Activated T-helper 2 cell treated with anti-CD3 and anti-CD28 coated beads, Interferon-gamma antibody, Interleukin-2, Interleukin-4, amounts not matched to agents 10 μg/mL and 5 μg/mL and 100 μg/mL, durations not matched to agents 14 hours and 24 hours and 36 hours (primary cell): ENCODE measurements at regions of chr6 and their contacts with region 1.

Region 1: GRCh38 chr6:152267967-152268845 is 369.0 kb downstream of the SYNE1 start:
- DNase-seq: no peak
- H3K4me3 Mint-ChIP-seq: no peak overlapping the region
- H3K27ac Mint-ChIP-seq: no peak overlapping the region
- H3K4me1 Mint-ChIP-seq: peaks cover 15% of the 10 kb centered on the region
- H3K27me3 Mint-ChIP-seq: no peaks in the 10 kb centered on the region

Region 2: DNA sequence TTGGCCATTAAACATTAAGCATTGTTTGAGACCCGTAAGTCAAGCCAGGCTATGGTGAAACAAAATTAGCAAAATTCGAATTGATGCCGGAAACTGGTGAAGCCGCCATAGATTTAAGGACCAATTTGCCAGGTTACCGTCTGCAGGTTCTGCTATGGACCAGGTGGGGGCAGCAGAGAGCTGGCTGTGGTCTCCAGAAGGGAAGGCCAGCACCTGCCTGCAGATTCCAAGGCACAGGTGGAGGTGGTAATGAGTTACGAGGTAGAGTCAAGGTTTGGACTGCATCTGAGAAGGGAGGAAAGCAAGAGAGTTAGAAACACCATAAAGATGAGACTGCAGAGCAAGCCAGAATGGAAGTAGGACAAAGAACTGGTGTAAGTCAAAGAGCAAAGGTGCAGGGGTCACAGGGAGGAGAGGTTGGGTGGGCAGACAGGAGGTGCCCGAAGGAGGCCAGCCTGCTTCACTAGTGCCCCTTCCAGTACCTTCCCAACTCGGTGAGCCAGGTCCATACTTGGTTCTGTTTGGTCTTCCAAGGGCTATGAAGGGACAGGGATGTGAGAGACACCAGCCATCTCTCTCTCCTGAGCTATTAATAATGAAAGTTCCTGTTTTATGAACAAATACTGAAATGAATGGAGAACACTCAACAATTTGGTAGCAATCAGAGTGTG is 592.3 kb before region 1 on chr6:
- intact Hi-C with region 1: loop called (anchors 2 kb)
- DNase-seq: peak; percentile 27
- H3K4me3 Mint-ChIP-seq: no peak overlapping the region
- H3K27ac Mint-ChIP-seq: no peak overlapping the region
- H3K4me1 Mint-ChIP-seq: peaks cover 4% of the 10 kb centered on the region
- H3K27me3 Mint-ChIP-seq: peaks cover 2% of the 10 kb centered on the region

Region 3: GRCh38 chr6:151690768-151691562 is 577.2 kb before region 1 on chr6:
- intact Hi-C with region 1: loop called (anchors 5 kb)
- DNase-seq: no peak
- H3K4me3 Mint-ChIP-seq: peak overlapping the region; percentile 51
- H3K27ac Mint-ChIP-seq: no peak overlapping the region
- H3K4me1 Mint-ChIP-seq: peaks cover 17% of the 10 kb centered on the region
- H3K27me3 Mint-ChIP-seq: peaks cover 12% of the 10 kb centered on the region

Region 4: GRCh38 chr6:151765444-151765886 is 502.7 kb before region 1 on chr6:
- intact Hi-C with region 1: loop called (anchors 1 kb)
- DNase-seq: no peak
- H3K4me3 Mint-ChIP-seq: no peak overlapping the region
- H3K27ac Mint-ChIP-seq: no peak overlapping the region
- H3K4me1 Mint-ChIP-seq: peaks cover 22% of the 10 kb centered on the region
- H3K27me3 Mint-ChIP-seq: peaks cover 13% of the 10 kb centered on the region

Region 5: DNA sequence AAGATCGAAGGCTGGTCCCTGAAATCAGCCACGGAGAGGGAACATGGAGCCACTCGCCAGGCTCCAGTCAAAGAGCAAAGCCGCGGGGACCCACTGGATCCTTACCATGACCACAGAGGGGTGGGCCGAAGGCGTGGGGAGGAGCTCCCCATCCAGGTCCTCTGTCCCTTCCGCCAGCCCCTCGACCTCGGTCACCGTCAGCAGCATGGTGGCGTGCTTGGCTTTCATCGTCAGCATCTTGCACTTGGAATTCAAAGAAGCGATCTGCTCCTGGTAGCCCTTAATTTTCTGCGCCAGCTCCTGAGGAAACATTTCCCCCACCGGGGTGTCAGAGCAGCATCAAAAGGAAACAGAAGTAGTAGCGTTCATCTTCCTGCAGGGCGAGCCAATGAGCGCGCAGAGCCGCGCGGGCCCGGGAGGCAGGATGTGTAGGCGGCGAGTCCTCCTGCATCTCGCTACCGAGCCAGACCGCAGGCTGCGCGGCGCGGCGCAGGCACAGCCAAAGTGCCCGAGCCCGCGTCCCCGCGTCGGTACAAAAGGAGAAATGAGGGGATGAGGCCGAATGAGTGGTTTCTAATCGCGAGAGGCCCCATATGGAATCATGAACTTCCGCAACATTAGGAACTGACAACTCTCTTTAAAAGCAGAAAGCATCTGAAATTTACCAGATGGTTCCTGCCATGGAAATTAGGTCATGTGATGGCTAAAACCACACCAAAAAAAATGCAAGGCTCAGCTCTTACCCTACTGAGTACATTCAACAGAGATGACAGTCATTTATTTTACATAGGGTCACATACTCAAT is 33.8 kb after region 1 on chr6:
- intact Hi-C with region 1: no loop called
- DNase-seq: peak; percentile 86
- H3K4me3 Mint-ChIP-seq: peak overlapping the region; percentile 99
- H3K27ac Mint-ChIP-seq: peak overlapping the region; percentile 99
- H3K4me1 Mint-ChIP-seq: peaks cover 22% of the 10 kb centered on the region
- H3K27me3 Mint-ChIP-seq: no peaks in the 10 kb centered on the region

Region 6: GRCh38 chr6:153215242-153215641 is 947.0 kb after region 1 on chr6:
- intact Hi-C with region 1: no loop called
- DNase-seq: no peak
- H3K4me3 Mint-ChIP-seq: no peak overlapping the region
- H3K27ac Mint-ChIP-seq: no peak overlapping the region
- H3K4me1 Mint-ChIP-seq: no peaks in the 10 kb centered on the region
- H3K27me3 Mint-ChIP-seq: peaks cover 3% of the 10 kb centered on the region